Left ventricle myocardium inferior (tissue), 1 donor: ENCODE measurements at regions of chr14 and their contacts with region 1.

Region 1: DNA sequence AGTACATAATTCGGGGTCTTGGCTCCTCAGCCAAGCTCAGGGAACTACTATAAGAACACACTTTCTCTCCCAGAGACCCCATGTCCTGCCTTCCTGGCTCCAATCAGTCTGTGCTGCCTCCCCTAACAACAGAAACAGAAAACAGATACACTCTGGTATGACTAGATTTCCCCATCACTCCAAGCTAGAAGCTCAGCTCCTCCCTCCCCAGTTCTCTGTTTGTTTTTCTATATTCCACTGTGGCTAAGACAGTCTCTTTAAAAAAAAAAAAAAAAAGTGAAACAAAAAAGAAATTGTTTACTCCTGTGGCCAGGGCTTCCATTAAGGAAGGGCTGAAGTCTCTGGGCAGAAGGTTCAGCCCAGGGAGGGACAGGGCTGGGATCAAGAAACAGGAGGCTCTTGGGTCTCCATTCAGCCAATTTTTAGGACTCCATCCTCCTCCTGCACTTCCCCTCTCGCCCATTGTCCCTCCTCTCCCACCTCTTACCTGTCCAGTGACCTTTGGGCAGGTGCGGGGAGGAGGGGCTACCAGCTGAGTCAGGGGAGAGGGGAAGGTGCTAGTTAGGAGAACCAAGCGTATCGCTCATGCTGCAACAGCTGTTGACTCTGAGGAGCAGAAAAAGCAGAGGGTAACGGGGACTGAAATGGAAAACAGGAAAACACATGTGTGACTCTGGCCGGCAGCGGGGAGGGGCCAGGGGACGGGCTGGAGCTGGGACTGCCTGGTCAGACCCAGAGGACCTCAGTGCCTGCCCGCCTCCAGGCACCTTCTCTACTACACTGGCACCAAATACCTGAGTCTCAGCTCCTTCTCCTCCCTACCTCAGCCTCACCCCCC is 4.1 kb upstream of the SLC7A7 start:
- DNase-seq: peak; percentile 55
- H3K4me3 ChIP-seq: peak overlapping the region; percentile 55
- H3K27ac ChIP-seq: peak overlapping the region; percentile 63
- H3K4me1 ChIP-seq: peaks cover 45% of the 10 kb centered on the region
- H3K27me3 ChIP-seq: no peaks in the 10 kb centered on the region
- CTCF ChIP-seq: no peak

Region 2: GRCh38 chr14:22653012-22653621 is 166.3 kb before region 1 on chr14:
- intact Hi-C with region 1: loop called (anchors 5 kb)
- DNase-seq: peak; percentile 25
- H3K4me3 ChIP-seq: no peak overlapping the region
- H3K27ac ChIP-seq: no peak overlapping the region
- H3K4me1 ChIP-seq: peaks cover 8% of the 10 kb centered on the region
- H3K27me3 ChIP-seq: no peaks in the 10 kb centered on the region
- CTCF ChIP-seq: peak; percentile 85

Region 3: DNA sequence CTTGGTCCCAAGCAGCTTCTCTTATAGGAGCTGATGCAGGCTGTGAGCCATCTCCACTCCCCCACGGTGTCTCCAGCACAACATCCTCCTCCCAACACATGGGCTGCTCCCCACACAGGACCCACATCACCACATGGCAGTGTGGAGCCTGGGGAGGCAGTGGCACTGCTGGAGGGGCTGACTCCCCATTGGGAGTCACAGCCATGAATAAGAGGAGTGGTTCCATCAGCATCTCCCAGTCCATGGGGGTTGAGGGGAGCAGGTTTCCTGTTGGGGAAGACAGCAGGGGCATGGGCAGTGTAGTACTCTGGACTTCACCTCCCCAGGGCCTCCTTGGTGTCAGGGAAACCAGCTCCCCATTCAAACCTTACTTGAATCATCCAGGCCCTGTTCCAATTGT is 93.4 kb before region 1 on chr14:
- intact Hi-C with region 1: no loop called
- DNase-seq: no peak
- H3K4me3 ChIP-seq: no peak overlapping the region
- H3K27ac ChIP-seq: no peak overlapping the region
- H3K4me1 ChIP-seq: no peaks in the 10 kb centered on the region
- H3K27me3 ChIP-seq: peaks cover 8% of the 10 kb centered on the region
- CTCF ChIP-seq: no peak